ENCODE measurements at regions of chr17 and their contacts with region 1.

Region 1: GRCh38 chr17:40019140-40019991 is 4.1 kb downstream of the CSF3 start:
- DNase-seq: no peak
- ATAC-seq: peak; percentile 21; the same call in 2 of the 3 replicates
- H3K4me3 ChIP-seq: no peak overlapping the region
- H3K27ac ChIP-seq: no peak overlapping the region
- H3K4me1 ChIP-seq: peaks cover 22% of the 10 kb centered on the region
- H3K27me3 ChIP-seq: no peaks in the 10 kb centered on the region
- CTCF ChIP-seq: no peak
- EP300 ChIP-seq: no peak
- POLR2A ChIP-seq: no peak
- RAD21 ChIP-seq: no peak

Region 2: DNA sequence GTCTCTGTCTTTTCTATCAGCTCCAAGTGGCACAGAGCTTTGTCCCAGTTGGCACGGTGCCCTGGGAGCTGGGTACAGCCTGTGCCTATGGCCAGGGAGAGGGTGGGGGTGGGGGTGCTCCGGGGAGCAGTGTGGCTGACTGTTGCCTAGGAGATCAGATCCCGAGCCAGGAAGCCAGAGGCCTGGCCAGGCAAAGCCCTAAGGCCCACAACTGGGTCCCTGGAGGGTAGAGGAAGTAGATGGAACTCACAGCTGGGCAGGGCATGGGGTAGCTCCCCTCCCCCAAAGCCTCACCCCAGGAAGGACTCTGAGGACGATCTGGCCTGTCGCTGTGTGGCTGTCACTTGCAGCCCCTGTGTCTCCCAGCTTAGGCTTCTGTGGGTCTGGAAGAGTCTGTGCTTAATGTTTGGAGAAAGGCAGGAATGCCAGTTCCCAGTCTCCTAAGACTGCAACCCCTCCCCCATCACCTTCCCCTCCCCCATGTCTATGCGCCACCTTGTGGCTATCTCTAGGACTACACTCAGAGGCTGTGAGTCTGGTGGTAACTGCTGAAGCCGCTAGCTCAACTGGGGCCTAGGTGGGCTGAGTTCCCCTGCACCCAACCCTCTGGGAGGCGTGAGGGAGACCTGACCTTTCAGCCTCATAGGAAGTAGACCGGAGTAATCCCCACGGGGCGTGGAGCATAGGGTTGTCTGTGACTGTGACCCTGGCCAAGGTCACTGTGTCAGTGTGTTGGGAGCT is 56.0 kb after region 1 on chr17:
- CTCF ChIA-PET with region 1: interaction called, 7 read pairs
- POLR2A ChIA-PET with region 1: interaction called, 4 read pairs
- in situ Hi-C with region 1: no loop called
- intact Hi-C with region 1: loop called (anchors 2 kb)
- DNase-seq: peak; percentile 71
- ATAC-seq: peak; percentile 76
- H3K4me3 ChIP-seq: no peak overlapping the region
- H3K27ac ChIP-seq: peak overlapping the region; percentile 16
- H3K4me1 ChIP-seq: peaks cover 49% of the 10 kb centered on the region
- H3K27me3 ChIP-seq: no peaks in the 10 kb centered on the region
- CTCF ChIP-seq: peak; percentile 97
- EP300 ChIP-seq: peak in 1 of 2 experiments; percentile 69; a peak in 1 of 4 replicates
- POLR2A ChIP-seq: no peak
- RAD21 ChIP-seq: peak; percentile 76

Region 3: DNA sequence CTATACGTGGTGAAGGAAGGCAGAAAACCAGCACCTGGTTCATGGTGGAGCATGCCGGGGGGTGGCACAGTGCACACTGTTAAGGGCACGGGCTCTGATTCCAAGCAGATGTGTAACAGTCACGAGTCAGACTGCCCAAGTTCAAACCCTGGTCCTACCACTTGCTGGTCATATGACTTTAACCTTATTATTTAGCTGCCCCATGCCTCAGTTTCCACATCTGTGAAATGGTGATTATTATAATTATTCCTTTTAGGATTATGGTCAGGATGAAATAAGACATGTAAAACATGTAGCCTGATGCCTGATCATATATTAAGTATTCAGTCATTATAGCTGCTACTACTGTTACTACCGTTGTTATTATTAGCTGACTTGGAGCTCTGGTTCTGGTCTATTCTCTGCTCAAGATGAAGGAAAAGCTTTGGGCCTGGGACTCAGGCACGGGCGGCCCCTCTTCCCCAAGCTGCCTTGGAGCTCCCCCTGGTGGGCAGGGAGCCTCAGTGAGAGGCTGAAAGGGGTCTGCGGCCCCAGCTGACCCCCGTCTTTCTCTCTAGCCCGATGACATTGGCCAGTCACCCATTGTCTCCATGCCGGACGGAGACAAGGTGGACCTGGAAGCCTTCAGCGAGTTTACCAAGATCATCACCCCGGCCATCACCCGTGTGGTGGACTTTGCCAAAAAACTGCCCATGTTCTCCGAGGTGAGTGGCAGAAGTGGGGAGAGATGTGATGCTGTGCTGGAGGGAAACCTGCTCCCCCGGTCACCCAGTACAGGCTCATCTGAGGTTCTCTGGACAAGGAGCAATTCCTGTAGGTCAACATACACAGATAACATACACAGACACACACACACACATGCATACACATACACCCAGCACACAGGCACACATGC is 67.0 kb after region 1 on chr17:
- CTCF ChIA-PET with region 1: interaction called, 11 read pairs
- POLR2A ChIA-PET with region 1: interaction called, 3 read pairs
- in situ Hi-C with region 1: no loop called
- intact Hi-C with region 1: no loop called
- DNase-seq: peak; percentile 52
- ATAC-seq: peak; percentile 64
- H3K4me3 ChIP-seq: no peak overlapping the region
- H3K27ac ChIP-seq: no peak overlapping the region
- H3K4me1 ChIP-seq: 0 out of 2 replicates have a peak, but pooled peaks cover 13% of the 10 kb centered on the region
- H3K27me3 ChIP-seq: no peaks in the 10 kb centered on the region
- CTCF ChIP-seq: peak; percentile 91
- EP300 ChIP-seq: no peak
- POLR2A ChIP-seq: no peak
- RAD21 ChIP-seq: peak; percentile 97

Region 4: DNA sequence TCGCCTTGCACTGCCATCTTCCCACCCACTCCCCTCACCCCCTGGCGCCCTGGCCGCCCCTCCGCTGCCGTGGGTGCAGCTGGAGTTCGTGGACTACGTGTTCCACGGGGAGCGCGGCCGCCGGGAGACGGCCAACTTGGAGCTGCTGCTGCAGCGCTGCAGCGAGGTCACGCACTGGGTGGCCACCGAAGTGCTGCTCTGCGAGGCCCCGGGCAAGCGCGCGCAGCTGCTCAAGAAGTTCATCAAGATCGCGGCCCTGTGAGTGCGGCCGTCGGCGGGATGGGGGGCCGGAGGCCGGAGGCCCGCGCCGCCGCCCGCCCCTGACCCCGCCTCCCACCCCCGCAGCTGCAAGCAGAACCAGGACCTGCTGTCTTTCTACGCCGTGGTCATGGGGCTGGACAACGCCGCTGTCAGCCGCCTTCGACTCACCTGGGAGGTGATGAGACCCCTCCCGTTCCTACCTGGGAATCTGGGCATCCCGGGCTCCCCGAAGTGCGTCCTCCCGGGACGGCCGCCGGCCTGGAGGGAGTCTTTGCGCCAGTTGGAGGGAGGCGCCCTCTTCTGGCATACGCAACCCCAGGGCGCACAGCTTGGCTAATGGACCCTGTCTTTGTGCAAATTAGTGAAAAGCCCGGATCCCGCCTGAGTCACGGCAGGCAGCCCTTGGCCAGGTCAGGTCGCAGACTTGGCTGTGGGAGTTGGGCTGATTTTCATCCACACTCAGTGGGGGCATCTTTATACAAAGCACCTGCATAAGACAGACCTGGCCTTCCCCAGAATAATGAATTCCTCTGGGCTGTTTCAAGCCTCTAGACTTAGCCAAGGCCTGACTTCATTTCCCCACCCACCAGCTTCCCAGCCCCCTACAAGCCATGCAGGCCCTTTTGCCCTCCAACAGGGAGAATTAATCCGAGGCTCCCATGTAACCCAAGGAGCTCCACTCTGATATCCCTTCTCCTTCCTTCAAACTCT is 172.2 kb after region 1 on chr17:
- CTCF ChIA-PET with region 1: interaction called, 10 read pairs
- POLR2A ChIA-PET with region 1: no interaction called
- in situ Hi-C with region 1: no loop called
- intact Hi-C with region 1: no loop called
- DNase-seq: peak; percentile 71
- ATAC-seq: peak; percentile 76
- H3K4me3 ChIP-seq: peak overlapping the region; percentile 61 to 80 (median 79)
- H3K27ac ChIP-seq: peak overlapping the region; percentile 53
- H3K4me1 ChIP-seq: peaks cover 37% of the 10 kb centered on the region
- H3K27me3 ChIP-seq: no peaks in the 10 kb centered on the region
- CTCF ChIP-seq: peak; percentile 96
- EP300 ChIP-seq: no peak
- POLR2A ChIP-seq: no peak
- RAD21 ChIP-seq: peak; percentile 50

Region 5: GRCh38 chr17:40287494-40288369 is 268.4 kb after region 1 on chr17 and contains the start of gene CDC6:
- CTCF ChIA-PET with region 1: interaction called, 9 read pairs
- POLR2A ChIA-PET with region 1: no interaction called
- in situ Hi-C with region 1: loop called (anchors 10 kb)
- intact Hi-C with region 1: no loop called
- DNase-seq: peak; percentile 100
- ATAC-seq: peak; percentile 95
- H3K4me3 ChIP-seq: peak within 1 kb of the TSS; percentile 81 to 99 (median 92)
- H3K27ac ChIP-seq: peak within 1 kb of the TSS; percentile 92
- H3K4me1 ChIP-seq: peaks cover 72% of the 10 kb centered on the region
- H3K27me3 ChIP-seq: no peaks in the 10 kb centered on the region
- CTCF ChIP-seq: peak; percentile 5; the same call in 1 of the 2 replicates
- EP300 ChIP-seq: peak; percentile 5 to 16; a peak in 1 of 4 replicates
- POLR2A ChIP-seq: peak; percentile 89 to 98
- RAD21 ChIP-seq: no peak
- total RNA-seq, gene CDC6: 114 and 154 TPM in 2 replicates